ENCODE measurements at regions of chr9 and their contacts with region 1.

Region 1: DNA sequence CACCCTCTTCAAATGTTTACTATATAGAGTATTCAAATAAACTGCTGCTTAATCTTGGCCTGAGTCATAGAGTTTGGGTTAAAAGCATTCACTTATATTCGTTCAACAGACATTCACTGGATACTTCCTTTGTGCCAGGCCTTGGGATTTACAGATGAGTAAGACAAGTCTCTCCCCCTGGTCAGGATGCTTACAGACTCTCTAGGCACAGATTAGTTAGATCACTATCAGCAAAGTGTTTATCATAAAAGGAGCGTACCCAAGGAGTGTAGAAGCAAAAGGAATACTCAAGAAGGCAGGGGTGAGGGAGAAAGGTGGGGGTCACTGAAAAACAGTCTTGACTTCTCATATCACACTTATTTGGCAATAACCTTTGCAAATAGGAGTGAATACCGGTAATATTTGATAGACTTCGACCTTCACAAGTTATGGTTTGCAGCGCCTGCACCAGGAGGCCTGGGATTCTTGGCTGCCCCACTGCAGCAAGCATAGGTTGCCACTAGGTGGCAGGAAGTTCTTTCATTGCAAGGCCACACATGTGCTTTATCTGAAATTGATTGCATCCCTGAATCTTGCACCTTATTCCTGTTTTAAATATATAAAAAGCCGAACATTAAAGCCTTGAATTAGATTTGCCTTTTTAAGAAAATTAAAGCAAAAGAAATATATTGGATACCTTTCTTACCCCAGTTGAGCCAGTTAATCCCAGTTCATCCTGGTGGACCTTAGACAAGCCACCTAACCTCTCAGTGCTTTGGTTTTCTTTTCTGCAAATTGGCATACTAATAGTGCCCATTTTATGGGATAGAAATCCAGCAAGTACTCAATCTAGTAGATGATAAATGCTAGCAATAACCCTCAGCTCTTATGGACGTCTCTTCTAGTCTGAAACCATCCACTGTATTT is 6.5 kb upstream of the TRMT10B start:
- DNase-seq: peak; percentile 41
- H3K4me3 ChIP-seq: no peak overlapping the region
- H3K27ac ChIP-seq: no peak overlapping the region
- H3K4me1 ChIP-seq: no peaks in the 10 kb centered on the region
- H3K27me3 ChIP-seq: no peaks in the 10 kb centered on the region
- CTCF ChIP-seq: peak; percentile 93 to 98

Region 2: DNA sequence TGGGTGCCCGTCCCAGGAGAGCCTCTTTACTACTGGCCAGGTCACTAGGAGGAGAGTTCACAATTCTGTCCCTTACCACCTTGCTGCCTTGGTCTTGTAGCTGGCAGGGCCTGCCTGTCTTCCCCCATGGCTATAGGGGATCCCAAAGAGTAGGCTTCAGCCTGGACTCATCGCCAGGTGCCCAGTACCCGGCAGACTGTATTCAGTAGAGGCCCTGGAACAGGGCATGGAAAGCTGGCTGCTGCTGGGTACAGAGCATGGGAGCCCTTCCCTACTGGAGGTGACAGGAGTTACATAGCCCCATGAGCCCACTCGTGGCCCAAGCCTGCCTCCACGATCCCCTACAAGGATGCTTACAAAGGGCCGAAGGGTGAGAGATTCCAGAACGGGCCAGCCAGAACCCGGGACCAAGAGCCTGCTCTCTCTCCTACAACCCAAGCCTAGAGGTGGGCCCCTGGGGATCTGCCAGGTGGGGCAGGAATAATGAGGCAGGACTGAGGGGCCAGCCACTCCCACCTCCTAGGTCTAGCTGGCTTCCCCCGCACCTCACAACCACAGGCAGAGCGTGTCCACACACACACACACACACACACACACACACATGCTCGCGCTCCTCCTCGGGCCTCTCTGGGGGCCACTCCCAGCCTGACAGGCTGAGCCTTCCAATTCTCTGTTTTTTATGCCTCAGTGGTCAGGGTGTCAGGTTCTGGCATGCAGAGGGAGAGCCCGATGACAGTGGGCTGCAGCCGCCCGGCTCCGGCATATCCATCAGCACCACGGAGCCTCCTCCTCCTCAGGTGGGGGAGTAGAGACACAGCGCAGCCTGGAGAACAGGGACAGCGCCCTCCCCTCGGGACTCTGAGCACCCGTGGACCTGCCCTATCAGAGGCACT is 899.1 kb before region 1 on chr9:
- CTCF ChIA-PET with region 1: no interaction called
- dilution Hi-C with region 1: no loop called
- in situ Hi-C with region 1: no loop called
- intact Hi-C with region 1: no loop called
- DNase-seq: peak; percentile 21
- H3K4me3 ChIP-seq: no peak overlapping the region
- H3K27ac ChIP-seq: no peak overlapping the region
- H3K4me1 ChIP-seq: no peaks in the 10 kb centered on the region
- H3K27me3 ChIP-seq: peaks cover 7% of the 10 kb centered on the region
- CTCF ChIP-seq: no peak

Region 3: GRCh38 chr9:37582548-37583157 is 164.4 kb before region 1 on chr9:
- CTCF ChIA-PET with region 1: no interaction called
- dilution Hi-C with region 1: no loop called
- in situ Hi-C with region 1: loop called in 1 of 2 experiments (anchors 25 kb)
- intact Hi-C with region 1: loop called (anchors 2 kb)
- DNase-seq: peak; percentile 42
- H3K4me3 ChIP-seq: no peak overlapping the region
- H3K27ac ChIP-seq: no peak overlapping the region
- H3K4me1 ChIP-seq: no peaks in the 10 kb centered on the region
- H3K27me3 ChIP-seq: no peaks in the 10 kb centered on the region
- CTCF ChIP-seq: peak; percentile 66 to 73

Region 4: GRCh38 chr9:37800631-37801286 is 53.7 kb after region 1 on chr9 and contains the start of gene DCAF10:
- CTCF ChIA-PET with region 1: no interaction called
- dilution Hi-C with region 1: loop called (anchors 10 kb)
- in situ Hi-C with region 1: no loop called
- intact Hi-C with region 1: loop called (anchors 2 kb)
- DNase-seq: peak; percentile 88
- H3K4me3 ChIP-seq: peak within 1 kb of the TSS; percentile 83 to 89 (median 87)
- H3K27ac ChIP-seq: peak within 1 kb of the TSS; percentile 60
- H3K4me1 ChIP-seq: peaks cover 9% of the 10 kb centered on the region
- H3K27me3 ChIP-seq: no peaks in the 10 kb centered on the region
- CTCF ChIP-seq: no peak
- total RNA-seq, gene DCAF10: 24.7 to 31.7 TPM

Region 5: GRCh38 chr9:38263532-38263931 is 516.4 kb after region 1 on chr9:
- CTCF ChIA-PET with region 1: no interaction called
- dilution Hi-C with region 1: no loop called
- in situ Hi-C with region 1: no loop called
- intact Hi-C with region 1: loop called (anchors 2 kb)
- DNase-seq: peak; percentile 31
- H3K4me3 ChIP-seq: no peak overlapping the region
- H3K27ac ChIP-seq: no peak overlapping the region
- H3K4me1 ChIP-seq: no peaks in the 10 kb centered on the region
- H3K27me3 ChIP-seq: no peaks in the 10 kb centered on the region
- CTCF ChIP-seq: peak; percentile 41 to 61

Region 6: DNA sequence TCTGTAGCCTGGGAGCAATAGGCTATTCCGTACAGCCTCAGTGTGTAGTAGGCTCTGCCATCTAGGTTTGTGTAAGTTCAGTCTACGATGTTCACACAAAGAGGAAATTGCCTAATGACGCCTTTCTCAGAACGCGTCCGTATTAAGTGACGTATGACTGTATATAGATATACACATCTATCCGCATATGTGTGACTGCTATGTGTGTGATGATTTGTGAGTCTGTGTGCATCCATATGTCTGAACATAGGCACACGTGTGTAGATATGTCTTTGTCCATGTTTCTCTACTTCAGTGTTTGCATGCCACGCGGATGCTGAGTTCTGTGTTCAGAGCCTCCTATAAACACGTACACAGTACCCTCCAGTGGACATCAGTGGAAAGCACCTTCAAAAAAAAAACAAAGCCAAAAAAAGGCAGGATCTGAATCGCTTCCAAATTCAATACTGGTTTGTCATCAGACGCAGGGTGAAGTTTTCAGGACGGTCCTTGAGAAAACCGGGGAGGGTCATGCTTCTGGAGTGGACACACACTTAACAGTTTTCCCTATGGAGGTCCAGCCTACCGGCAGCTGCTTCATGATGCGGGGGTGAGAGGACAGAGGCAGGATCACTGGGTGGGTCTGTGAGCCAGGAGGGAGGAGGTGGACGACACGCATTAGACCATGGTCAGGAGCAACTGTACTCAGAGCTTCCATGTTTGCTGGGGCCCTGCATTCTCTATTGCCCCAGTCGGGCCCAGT is 615.9 kb after region 1 on chr9:
- CTCF ChIA-PET with region 1: no interaction called
- dilution Hi-C with region 1: no loop called
- in situ Hi-C with region 1: no loop called
- intact Hi-C with region 1: loop called (anchors 1 kb)
- DNase-seq: peak; percentile 61
- H3K4me3 ChIP-seq: no peak overlapping the region
- H3K27ac ChIP-seq: no peak overlapping the region
- H3K4me1 ChIP-seq: peaks cover 3% of the 10 kb centered on the region
- H3K27me3 ChIP-seq: no peaks in the 10 kb centered on the region
- CTCF ChIP-seq: peak; percentile 60 to 71